Left ventricle myocardium inferior (tissue), 1 donor: ENCODE measurements at regions of chr4 and their contacts with region 1.

Region 1: DNA sequence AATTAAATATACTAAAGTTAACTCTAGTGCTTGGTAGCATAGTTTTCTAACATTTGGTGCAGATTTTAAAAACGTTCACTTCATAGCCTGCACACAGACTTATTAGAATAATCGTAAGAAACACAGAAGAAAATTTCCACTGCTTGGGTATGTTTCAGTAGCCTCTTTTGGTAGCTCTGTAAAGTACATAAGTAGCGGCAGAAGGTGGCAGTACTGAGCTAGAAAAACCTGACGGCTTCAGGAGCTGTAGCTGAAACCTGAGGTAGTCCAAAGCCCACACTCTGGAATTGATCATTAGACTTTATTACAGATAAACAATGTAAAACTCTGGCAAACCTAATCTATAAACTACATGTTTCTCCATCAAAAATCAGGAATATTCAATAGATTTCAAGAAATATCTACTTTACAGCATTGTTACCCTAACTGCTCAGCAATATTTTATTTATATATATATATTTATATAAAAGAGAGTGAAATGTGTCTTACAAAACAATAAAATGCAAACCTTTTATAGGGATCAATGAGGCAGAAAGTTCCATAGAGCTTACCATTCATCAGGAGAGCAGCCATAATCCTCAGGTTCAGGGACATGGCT is 88.2 kb downstream of the ATP8A1 start:
- DNase-seq: no peak
- H3K4me3 ChIP-seq: no peak overlapping the region
- H3K27ac ChIP-seq: no peak overlapping the region
- H3K4me1 ChIP-seq: peaks cover 35% of the 10 kb centered on the region
- H3K27me3 ChIP-seq: no peaks in the 10 kb centered on the region
- CTCF ChIP-seq: peak; percentile 83

Region 2: DNA sequence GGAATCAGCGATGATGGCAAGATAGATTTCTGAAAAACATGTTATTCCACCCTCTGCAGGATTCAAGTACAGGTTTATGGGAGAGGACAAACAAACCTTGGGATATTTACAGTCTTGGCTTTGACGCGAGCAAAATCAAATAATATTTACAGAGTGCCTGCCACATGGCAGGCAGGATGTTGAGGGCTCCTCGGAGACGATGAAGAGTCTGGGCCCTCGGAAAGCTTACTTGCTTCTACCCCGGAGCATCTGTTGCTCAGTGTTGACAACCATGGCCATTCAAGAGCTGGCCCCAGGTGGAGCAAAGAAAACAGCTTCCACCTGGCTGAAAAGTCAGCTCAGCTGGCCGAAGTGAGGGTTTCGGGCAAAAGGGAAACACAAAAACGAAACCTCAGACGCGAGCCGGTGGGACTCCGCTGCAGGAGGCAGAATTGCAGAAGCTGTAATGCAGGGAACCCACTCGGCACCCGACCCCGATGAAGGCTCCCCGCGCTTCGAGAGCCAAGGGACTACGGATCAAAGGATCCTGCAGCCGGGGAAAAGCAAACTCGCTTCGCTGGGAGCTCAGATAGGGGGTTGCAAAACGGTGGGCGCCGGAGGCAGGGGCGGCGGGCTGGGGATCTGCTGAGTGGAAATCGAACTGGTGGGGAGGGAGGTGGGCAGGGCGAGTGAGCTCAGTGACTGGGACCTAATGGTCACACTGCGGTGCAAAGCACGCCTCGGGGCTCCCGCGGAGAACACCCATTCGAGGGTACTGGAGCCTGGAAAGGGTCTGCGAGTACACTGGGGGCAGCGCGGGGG is 87.4 kb after region 1 on chr4:
- intact Hi-C with region 1: loop called (anchors 1 kb)
- DNase-seq: peak; percentile 40
- H3K4me3 ChIP-seq: peak overlapping the region; percentile 78
- H3K27ac ChIP-seq: peak overlapping the region; percentile 96
- H3K4me1 ChIP-seq: peaks cover 65% of the 10 kb centered on the region
- H3K27me3 ChIP-seq: no peaks in the 10 kb centered on the region
- CTCF ChIP-seq: no peak

Region 3: GRCh38 chr4:42750091-42750490 is 181.4 kb after region 1 on chr4:
- intact Hi-C with region 1: loop called (anchors 5 kb)
- DNase-seq: no peak
- H3K4me3 ChIP-seq: no peak overlapping the region
- H3K27ac ChIP-seq: no peak overlapping the region
- H3K4me1 ChIP-seq: no peaks in the 10 kb centered on the region
- H3K27me3 ChIP-seq: no peaks in the 10 kb centered on the region
- CTCF ChIP-seq: peak; percentile 64

Region 4: GRCh38 chr4:42865572-42866189 is 297.0 kb after region 1 on chr4:
- intact Hi-C with region 1: loop called (anchors 5 kb)
- DNase-seq: no peak
- H3K4me3 ChIP-seq: no peak overlapping the region
- H3K27ac ChIP-seq: no peak overlapping the region
- H3K4me1 ChIP-seq: no peaks in the 10 kb centered on the region
- H3K27me3 ChIP-seq: peaks cover 5% of the 10 kb centered on the region
- CTCF ChIP-seq: peak; percentile 81